ENCODE measurements at regions of chr10 and their contacts with region 1.

Region 1: DNA sequence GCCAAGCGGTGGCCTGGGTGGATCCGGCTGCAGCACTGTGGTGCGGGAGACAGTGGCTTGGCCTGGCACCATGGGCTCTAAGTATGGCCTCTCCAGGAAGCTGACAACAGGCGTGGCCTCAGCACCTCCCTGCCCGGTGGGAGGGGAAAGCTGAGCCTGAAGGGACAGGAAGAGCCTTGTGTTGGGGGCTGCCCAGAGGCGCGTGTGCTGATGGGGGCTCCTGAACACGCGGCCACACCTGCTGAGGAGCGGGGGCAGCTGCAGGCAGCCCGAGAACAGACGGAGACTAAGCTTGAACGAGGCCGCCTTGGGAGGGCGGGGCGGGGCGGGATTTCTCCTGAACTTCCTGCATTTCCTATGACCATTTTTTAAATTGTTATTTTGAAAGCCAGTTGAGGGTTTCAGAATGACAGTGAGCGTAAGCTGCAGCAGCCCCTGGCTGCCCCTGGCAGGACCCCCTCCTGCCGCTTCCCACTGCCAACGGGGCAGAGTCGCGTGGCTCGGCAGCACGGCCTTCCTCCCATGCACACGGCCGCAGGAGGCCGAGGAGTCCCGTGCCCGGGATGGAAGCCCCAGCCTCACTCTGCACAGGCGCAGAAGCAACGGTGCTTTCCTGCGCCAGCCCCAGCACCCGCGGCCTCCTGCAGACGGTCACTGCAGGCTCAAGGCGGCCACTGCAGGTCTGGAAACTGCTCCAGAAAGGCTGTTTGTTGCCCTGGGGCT is 43.2 kb downstream of the DPYSL4 start:
- DNase-seq: no peak
- H3K4me3 ChIP-seq: no peak overlapping the region
- CTCF ChIP-seq: no peak

Region 2: DNA sequence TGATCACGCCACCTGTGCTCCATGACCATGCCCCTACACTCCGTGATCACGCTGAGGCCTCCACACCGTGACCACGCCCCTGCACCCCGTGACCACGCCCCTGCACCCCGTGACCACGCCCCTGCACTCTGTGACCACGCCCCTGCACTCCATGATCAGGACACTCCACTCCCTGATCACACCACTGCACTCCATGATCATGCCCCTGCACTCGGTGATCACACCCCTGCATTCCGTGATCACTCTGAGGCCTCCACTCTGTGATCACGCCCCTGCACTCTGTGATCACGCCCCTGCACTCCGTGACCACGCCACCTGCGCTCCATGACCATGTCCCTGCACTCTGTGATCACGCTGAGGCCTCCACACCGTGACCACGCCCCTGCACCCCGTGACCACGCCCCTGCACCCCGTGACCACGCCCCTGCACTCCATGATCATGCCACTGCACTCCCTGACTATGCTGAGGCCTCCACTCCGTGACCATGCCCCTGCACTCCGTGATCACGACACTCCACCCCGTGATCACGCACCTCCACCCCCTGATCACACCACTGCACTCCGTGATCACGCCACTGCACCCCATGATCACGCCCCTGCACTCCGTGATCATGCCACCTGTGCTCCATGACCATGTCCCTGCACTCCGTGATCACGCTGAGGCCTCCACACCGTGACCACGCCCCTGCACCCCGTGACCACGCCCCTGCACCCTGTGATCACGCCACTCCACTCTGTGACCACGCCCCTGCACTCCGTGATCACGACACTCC is 50.1 kb after region 1 on chr10:
- in situ Hi-C with region 1: loop called (anchors 5 kb)
- DNase-seq: no peak
- H3K4me3 ChIP-seq: no peak overlapping the region
- CTCF ChIP-seq: no peak

Region 3: DNA sequence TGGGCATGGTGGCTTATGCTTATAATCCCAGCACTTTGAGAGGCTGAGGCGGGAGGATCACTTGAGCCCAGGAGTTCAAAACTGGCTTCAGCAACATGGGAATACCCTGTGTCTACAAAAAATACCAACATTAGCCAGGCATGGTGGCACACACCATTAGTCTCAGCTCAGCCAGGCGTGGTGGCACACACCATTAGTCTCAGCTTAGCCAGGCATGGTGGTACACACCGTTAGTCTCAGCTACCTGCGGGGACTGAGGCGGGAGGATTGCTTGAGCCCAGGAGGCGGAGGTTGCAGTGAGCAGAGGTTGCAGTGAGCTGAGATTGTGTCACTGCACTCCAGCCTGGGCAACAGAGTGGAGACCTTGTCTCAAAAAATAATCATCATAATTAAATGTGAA is 111.0 kb after region 1 on chr10:
- in situ Hi-C with region 1: loop called (anchors 5 kb)
- DNase-seq: no peak
- H3K4me3 ChIP-seq: no peak overlapping the region
- CTCF ChIP-seq: no peak

Region 4: GRCh38 chr10:132654702-132655661 is 425.0 kb after region 1 on chr10:
- in situ Hi-C with region 1: loop called (anchors 10 kb)
- DNase-seq: peak; percentile 33
- H3K4me3 ChIP-seq: no peak overlapping the region
- CTCF ChIP-seq: peak; percentile 96

Measured in astrocyte of the cerebellum (primary cell).